ENCODE measurements at regions of chr20 and their contacts with region 1.

Region 1: DNA sequence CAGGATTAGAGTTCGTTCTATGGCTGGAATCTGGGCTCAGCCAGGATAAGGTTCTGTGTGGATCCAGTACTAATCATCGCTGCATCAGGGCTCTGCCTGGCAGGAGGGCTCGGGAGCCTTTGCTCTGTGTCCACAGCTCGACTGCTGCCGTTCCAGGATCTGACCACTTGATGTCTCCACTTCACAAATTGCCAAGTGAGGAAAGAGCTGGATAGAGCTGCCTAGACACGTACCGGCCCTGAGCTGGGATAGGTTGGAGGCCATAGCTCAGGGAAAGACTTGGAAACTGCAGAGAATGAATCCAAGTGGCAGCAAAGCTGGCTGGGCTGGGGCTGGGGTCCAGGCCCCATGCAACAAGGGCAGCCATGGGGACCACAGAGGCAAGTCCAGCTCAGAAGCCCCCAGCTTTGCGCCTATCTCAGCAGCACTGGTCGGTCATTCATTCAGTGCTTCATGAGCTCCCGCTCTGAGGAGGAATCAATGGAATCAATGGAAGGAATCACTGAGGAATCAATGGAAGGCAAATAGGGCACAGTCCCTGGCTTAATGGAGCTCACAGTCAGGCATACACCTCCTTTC is 38.0 kb upstream of the TOP1 start:
- DNase-seq: peak; percentile 91
- H3K4me3 ChIP-seq: no peak overlapping the region
- H3K27ac ChIP-seq: no peak overlapping the region
- H3K4me1 ChIP-seq: peaks cover 14% of the 10 kb centered on the region
- H3K27me3 ChIP-seq: no peaks in the 10 kb centered on the region
- CTCF ChIP-seq: peak; percentile 87

Region 2: GRCh38 chr20:40702504-40702903 is 288.1 kb before region 1 on chr20:
- CTCF ChIA-PET with region 1: no interaction called
- POLR2A ChIA-PET with region 1: no interaction called
- intact Hi-C with region 1: no loop called
- DNase-seq: no peak
- H3K4me3 ChIP-seq: no peak overlapping the region
- H3K27ac ChIP-seq: no peak overlapping the region
- H3K4me1 ChIP-seq: no peaks in the 10 kb centered on the region
- H3K27me3 ChIP-seq: no peaks in the 10 kb centered on the region
- CTCF ChIP-seq: peak; percentile 49; the same call in 1 of the 2 replicates

Region 3: GRCh38 chr20:40786336-40786735 is 204.3 kb before region 1 on chr20:
- CTCF ChIA-PET with region 1: no interaction called
- POLR2A ChIA-PET with region 1: no interaction called
- intact Hi-C with region 1: no loop called
- DNase-seq: no peak
- H3K4me3 ChIP-seq: no peak overlapping the region
- H3K27ac ChIP-seq: no peak overlapping the region
- H3K4me1 ChIP-seq: no peaks in the 10 kb centered on the region
- H3K27me3 ChIP-seq: peaks cover 66% of the 10 kb centered on the region
- CTCF ChIP-seq: no peak

Region 4: DNA sequence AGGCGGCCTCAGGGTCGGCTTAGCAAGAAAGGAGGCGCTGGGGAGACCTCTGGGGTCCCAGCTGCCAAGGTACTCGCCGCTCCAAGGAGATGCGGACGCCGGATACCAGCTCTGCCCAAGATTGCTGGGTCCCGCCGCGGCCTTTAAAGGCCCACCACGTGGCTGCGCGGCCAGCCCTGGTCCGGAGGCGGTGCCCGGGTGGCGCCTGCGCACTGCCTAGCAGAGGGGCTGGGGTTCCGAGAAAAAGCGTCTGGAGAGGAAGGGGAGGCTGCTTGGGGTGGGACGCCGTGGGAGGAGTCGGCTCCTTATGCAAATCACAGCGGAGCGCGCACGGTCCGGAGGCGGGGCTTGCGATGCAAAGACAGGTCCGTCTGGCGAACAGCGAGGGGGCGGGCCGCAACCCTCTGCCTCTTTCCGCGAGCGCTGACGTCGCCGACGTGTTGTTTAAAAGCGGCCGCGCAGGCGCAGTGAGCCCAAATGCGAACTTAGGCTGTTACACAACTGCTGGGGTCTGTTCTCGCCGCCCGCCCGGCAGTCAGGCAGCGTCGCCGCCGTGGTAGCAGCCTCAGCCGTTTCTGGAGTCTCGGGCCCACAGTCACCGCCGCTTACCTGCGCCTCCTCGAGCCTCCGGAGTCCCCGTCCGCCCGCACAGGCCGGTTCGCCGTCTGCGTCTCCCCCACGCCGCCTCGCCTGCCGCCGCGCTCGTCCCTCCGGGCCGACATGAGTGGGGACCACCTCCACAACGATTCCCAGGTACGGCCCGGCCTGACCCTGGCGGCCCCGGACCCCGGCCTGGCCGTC is 37.9 kb after region 1 on chr20 and contains the start of gene TOP1:
- CTCF ChIA-PET with region 1: interaction called, 7 read pairs
- POLR2A ChIA-PET with region 1: no interaction called
- intact Hi-C with region 1: loop called (anchors 1 kb)
- DNase-seq: peak; percentile 100
- H3K4me3 ChIP-seq: peak within 1 kb of the TSS; percentile 96
- H3K27ac ChIP-seq: peak within 1 kb of the TSS; percentile 98
- H3K4me1 ChIP-seq: peaks cover 35% of the 10 kb centered on the region
- H3K27me3 ChIP-seq: no peaks in the 10 kb centered on the region
- CTCF ChIP-seq: no peak
- total RNA-seq, gene TOP1: 108 and 125 TPM in 2 replicates

Region 5: GRCh38 chr20:41078329-41078728 is 87.7 kb after region 1 on chr20:
- CTCF ChIA-PET with region 1: interaction called, 11 read pairs
- POLR2A ChIA-PET with region 1: no interaction called
- intact Hi-C with region 1: loop called (anchors 2 kb)
- DNase-seq: peak; percentile 83
- H3K4me3 ChIP-seq: no peak overlapping the region
- H3K27ac ChIP-seq: peak overlapping the region; percentile 57
- H3K4me1 ChIP-seq: peaks cover 26% of the 10 kb centered on the region
- H3K27me3 ChIP-seq: no peaks in the 10 kb centered on the region
- CTCF ChIP-seq: peak; percentile 70

Region 6: GRCh38 chr20:41095110-41095969 is 104.7 kb after region 1 on chr20:
- CTCF ChIA-PET with region 1: interaction called, 26 read pairs
- POLR2A ChIA-PET with region 1: no interaction called
- intact Hi-C with region 1: loop called (anchors 1 kb)
- DNase-seq: peak; percentile 73
- H3K4me3 ChIP-seq: no peak overlapping the region
- H3K27ac ChIP-seq: no peak overlapping the region
- H3K4me1 ChIP-seq: peaks cover 6% of the 10 kb centered on the region
- H3K27me3 ChIP-seq: no peaks in the 10 kb centered on the region
- CTCF ChIP-seq: peak; percentile 92

Region 7: GRCh38 chr20:41136680-41137613 is 146.3 kb after region 1 on chr20 and contains the start of gene PLCG1:
- CTCF ChIA-PET with region 1: interaction called, 16 read pairs
- POLR2A ChIA-PET with region 1: no interaction called
- intact Hi-C with region 1: no loop called
- DNase-seq: peak; percentile 92
- H3K4me3 ChIP-seq: peak within 1 kb of the TSS; percentile 93
- H3K27ac ChIP-seq: peak within 1 kb of the TSS; percentile 92
- H3K4me1 ChIP-seq: peaks cover 26% of the 10 kb centered on the region
- H3K27me3 ChIP-seq: no peaks in the 10 kb centered on the region
- CTCF ChIP-seq: no peak
- total RNA-seq, gene PLCG1: 146 and 174 TPM in 2 replicates

Region 8: DNA sequence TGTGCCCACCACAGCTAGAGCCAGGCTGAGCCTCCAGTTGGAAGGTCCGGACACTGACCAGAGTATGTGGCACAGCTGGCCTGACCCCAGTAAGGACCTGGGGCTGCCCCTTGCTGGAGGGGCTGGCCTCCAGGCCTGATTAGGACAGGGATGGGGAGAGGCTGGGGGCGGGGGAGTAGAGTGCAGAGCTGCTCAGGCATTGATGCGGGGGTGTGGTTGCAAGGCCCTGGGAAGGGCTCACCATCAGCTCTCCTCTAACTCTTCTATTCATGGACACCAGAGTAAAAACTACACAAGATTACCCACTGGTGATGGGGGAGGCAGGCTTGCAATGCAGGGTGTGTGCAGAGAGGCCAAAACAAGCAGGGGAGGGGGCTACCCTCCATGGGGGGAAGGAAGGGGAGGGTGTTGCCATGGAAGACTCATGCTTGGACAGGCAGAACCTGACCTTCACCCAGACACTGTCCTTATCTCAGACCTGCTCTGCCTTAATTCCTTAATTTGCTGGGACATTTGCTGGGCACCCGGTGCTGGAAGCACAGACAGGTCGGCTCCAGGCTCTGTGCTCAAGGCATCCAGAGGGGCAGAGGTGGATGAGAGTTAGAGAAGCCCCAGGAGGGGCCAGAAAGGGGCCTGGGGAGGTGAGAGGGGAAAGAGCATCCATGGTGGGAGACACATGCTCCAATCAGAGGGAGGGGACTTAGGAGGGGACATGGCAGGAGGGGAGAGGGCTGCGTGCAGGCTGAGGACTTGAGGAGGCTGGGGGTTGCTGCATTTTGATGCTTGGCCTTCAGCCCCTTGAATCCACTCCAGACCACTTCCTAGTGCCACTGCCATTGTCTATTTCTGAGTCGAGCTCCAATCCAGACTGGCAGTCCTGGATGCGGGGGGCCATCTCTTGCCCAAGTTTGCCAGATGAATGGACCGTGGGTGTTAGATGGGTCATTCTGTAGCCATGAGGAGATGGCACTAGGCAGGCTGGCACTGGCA is 383.6 kb after region 1 on chr20:
- CTCF ChIA-PET with region 1: interaction called, 19 read pairs
- POLR2A ChIA-PET with region 1: no interaction called
- intact Hi-C with region 1: no loop called
- DNase-seq: no peak
- H3K4me3 ChIP-seq: no peak overlapping the region
- H3K27ac ChIP-seq: no peak overlapping the region
- H3K4me1 ChIP-seq: no peaks in the 10 kb centered on the region
- H3K27me3 ChIP-seq: no peaks in the 10 kb centered on the region
- CTCF ChIP-seq: no peak